ENCODE measurements at regions of chr11 and their contacts with region 1.

Region 1: GRCh38 chr11:116787786-116788486 is at the start of gene ZPR1:
- DNase-seq: peak; percentile 84
- H3K4me3 Mint-ChIP-seq: peak within 1 kb of the TSS; percentile 90
- H3K27ac Mint-ChIP-seq: peak within 1 kb of the TSS; percentile 88
- H3K4me1 Mint-ChIP-seq: peaks cover 50% of the 10 kb centered on the region
- H3K27me3 Mint-ChIP-seq: no peaks in the 10 kb centered on the region
- total RNA-seq, gene ZPR1: 104 TPM in 2 replicates

Region 2: DNA sequence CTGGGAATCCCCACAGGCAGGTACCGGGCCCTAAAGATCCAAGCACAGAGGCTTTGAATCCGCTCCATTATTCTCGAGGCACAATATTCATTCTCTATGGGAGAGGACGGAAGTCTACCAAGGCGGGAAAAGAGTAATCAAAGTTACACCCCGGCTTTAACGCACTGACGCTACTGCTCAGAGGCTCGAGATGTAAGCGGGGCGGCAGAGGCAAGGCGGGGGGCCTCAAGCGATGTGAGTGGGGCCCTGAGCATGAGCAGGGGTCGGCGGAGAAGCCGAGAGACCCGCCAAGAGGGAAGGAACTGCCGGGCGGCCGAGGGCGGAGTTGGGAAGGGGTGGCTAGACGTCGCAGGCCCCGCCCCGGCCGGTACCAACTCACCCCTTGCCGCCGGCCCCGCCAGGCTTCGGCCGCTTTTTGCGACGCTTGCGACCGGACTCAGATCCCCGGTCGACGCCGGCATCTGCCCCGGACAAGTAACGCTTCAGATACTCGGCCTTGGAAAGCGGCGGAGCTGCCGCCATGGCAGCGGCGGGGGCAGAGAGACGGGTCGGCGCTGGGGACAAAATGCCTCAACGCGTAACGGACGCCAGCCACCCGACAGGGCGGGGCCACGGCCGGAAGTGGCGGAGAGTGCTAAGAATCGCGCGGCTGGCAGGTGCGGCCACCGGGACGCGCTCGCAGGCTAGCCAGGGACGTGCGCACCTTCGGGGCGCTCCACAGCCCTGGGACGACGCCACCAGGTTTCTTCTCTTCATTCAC is 15.3 kb before region 1 on chr11 and contains the start of gene BUD13:
- intact Hi-C with region 1: loop called (anchors 1 kb)
- DNase-seq: peak; percentile 93
- H3K4me3 Mint-ChIP-seq: peak within 1 kb of the TSS; percentile 99
- H3K27ac Mint-ChIP-seq: peak within 1 kb of the TSS; percentile 97
- H3K4me1 Mint-ChIP-seq: peaks cover 46% of the 10 kb centered on the region
- H3K27me3 Mint-ChIP-seq: no peaks in the 10 kb centered on the region
- total RNA-seq, gene BUD13: 30.0 and 33.4 TPM in 2 replicates

Region 3: GRCh38 chr11:116879800-116880625 is 92.1 kb after region 1 on chr11:
- intact Hi-C with region 1: loop called (anchors 1 kb)
- DNase-seq: no peak
- H3K4me3 Mint-ChIP-seq: no peak overlapping the region
- H3K27ac Mint-ChIP-seq: peak overlapping the region; percentile 66
- H3K4me1 Mint-ChIP-seq: peaks cover 25% of the 10 kb centered on the region
- H3K27me3 Mint-ChIP-seq: no peaks in the 10 kb centered on the region

Region 4: GRCh38 chr11:117107701-117108590 is 320.0 kb after region 1 on chr11:
- intact Hi-C with region 1: loop called (anchors 1 kb)
- DNase-seq: no peak
- H3K4me3 Mint-ChIP-seq: no peak overlapping the region
- H3K27ac Mint-ChIP-seq: no peak overlapping the region
- H3K4me1 Mint-ChIP-seq: no peaks in the 10 kb centered on the region
- H3K27me3 Mint-ChIP-seq: peaks cover 2% of the 10 kb centered on the region

Region 5: GRCh38 chr11:117226388-117227385 is 438.8 kb after region 1 on chr11:
- intact Hi-C with region 1: loop called (anchors 1 kb)
- DNase-seq: peak; percentile 14
- H3K4me3 Mint-ChIP-seq: no peak overlapping the region
- H3K27ac Mint-ChIP-seq: peak overlapping the region; percentile 31
- H3K4me1 Mint-ChIP-seq: peaks cover 36% of the 10 kb centered on the region
- H3K27me3 Mint-ChIP-seq: no peaks in the 10 kb centered on the region

Measured in activated T-helper 1 cell treated with anti-CD3 and anti-CD28 coated beads, Interleukin-12 subunit alpha, Interleukin-12 subunit beta, Interleukin-2, Interleukin-4 antibody, amounts not matched to agents 30 ng/mL and 10 ng/mL and 1 ng/mL, durations not matched to agents 14 hours and 24 hours and 36 hours (primary cell).